Common myeloid progenitor, CD34-positive (primary cell): ENCODE measurements at regions of chrX and their contacts with region 1.

Region 1: GRCh38 chrX:129793604-129794191 is 13.9 kb downstream of the SASH3 start:
- DNase-seq: no peak
- H3K4me3 ChIP-seq: no peak overlapping the region
- H3K27ac ChIP-seq: no peak overlapping the region
- H3K4me1 ChIP-seq: peaks cover 0 to 1% (median 0%) of the 10 kb centered on the region in 4 experiments
- H3K27me3 ChIP-seq: no peaks in the 10 kb centered on the region

Region 2: GRCh38 chrX:129781134-129781672 is 12.5 kb before region 1 on chrX:
- CTCF ChIA-PET with region 1: interaction called, 14 read pairs
- POLR2A ChIA-PET with region 1: interaction called, 6 read pairs
- DNase-seq: peak; percentile 61 to 93 (median 87)
- H3K4me3 ChIP-seq: peak overlapping the region in 6 of 7 experiments; percentile 62 to 78 (median 72)
- H3K27ac ChIP-seq: peak overlapping the region in 1 of 2 experiments; percentile 81
- H3K4me1 ChIP-seq: peaks cover 28 to 88% (median 77%) of the 10 kb centered on the region in 4 experiments
- H3K27me3 ChIP-seq: no peaks in the 10 kb centered on the region